ENCODE measurements at regions of chr14 and their contacts with region 1.

Region 1: DNA sequence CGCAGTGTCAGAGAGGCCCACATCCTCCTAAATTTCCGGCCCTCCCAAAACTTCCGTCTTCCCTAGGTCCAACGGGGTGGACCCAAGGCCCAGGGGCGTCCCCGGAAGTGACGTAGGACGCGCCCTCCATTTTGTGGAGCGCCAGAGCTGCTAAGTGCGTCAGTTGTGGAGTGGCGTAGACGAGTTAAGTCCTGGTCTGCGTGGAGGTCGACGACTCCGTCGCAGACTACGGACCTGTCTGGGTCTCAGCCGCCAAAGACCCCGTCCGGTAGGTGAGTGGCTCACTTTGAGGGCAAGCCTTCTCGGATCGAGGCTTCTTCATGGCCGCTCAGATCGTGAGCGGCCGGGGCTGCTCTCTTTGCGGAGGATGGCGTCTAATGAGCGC is at the start of gene SRSF5:
- DNase-seq: peak; percentile 93
- ATAC-seq: peak; percentile 81
- H3K4me3 Mint-ChIP-seq: peak within 1 kb of the TSS; percentile 96
- H3K27ac Mint-ChIP-seq: peak within 1 kb of the TSS; percentile 99
- H3K4me1 Mint-ChIP-seq: peaks cover 56% of the 10 kb centered on the region
- H3K27me3 Mint-ChIP-seq: no peaks in the 10 kb centered on the region
- total RNA-seq, gene SRSF5: 565 to 587 TPM

Region 2: DNA sequence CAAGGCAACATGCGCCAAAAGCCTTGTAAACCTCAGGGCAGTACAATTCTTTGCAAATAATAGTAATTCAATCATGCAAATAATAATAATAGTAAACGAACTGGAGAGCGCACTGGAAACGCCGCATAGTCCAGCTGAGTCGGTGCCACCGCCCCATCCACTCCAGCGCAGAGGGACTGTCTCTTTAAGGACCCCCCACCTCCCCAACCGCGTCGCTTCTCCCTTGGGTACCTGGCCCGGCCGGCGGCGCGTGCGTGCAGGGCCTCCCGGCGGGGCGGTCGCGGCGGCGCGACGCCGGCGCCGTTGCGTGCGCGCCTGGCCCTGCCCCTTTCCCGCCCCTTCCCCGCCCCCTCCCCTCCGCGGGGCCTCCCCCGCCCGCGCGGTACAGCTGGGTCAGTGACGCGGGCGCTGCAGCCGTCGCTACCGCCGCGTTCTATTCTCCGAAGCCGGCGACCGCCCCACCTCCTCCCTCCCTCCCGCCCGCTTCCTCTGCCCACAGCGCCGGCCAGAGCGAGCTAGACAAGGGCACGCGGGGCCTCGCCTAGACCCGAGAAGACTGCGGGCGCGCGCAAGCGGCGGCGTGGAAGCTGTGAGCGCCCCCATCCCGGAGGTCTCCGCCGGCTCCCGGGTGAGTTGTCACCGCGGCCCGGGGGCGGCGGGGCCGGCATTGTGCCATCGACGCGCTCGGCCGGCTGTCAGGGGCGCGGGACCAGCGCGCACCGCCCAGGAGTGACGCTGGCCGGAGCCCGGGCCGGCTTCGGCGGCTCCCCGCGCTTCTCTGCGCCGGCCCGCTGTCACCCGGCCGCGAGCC is 155.6 kb before region 1 on chr14 and contains the start of gene SUSD6:
- POLR2A ChIA-PET with region 1: interaction called, 12 read pairs
- DNase-seq: peak; percentile 88
- ATAC-seq: peak; percentile 73
- H3K4me3 Mint-ChIP-seq: peak within 1 kb of the TSS; percentile 100
- H3K27ac Mint-ChIP-seq: peak within 1 kb of the TSS; percentile 98
- H3K4me1 Mint-ChIP-seq: peaks cover 54% of the 10 kb centered on the region
- H3K27me3 Mint-ChIP-seq: no peaks in the 10 kb centered on the region
- total RNA-seq, gene SUSD6: 42.9 to 44.5 TPM

Region 3: GRCh38 chr14:69755784-69756183 is 11.2 kb before region 1 on chr14:
- POLR2A ChIA-PET with region 1: interaction called, 21 read pairs
- DNase-seq: no peak
- ATAC-seq: no peak
- H3K4me3 Mint-ChIP-seq: no peak overlapping the region
- H3K27ac Mint-ChIP-seq: peak overlapping the region; percentile 85
- H3K4me1 Mint-ChIP-seq: peaks cover 7% of the 10 kb centered on the region
- H3K27me3 Mint-ChIP-seq: no peaks in the 10 kb centered on the region

Region 4: DNA sequence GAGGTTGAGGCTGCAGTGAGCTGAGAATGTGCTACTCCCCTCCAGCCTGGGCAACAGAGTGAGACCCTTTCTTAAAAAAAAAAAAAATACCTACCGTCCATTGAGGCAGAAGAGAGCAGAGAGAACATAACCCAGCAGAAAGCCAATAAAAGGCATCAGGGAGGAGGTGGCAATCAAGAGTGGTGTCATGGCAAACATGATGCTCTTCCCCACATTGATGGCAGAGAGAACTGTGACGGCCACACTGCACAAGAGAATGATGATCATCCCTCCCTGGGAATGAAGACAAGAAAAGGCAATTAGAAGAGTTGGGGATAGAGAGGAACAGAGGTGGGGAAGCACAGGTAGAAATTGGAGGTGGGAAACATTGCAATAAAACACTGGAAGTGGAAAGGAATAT is 12.1 kb after region 1 on chr14:
- POLR2A ChIA-PET with region 1: interaction called, 19 read pairs
- DNase-seq: no peak
- ATAC-seq: no peak
- H3K4me3 Mint-ChIP-seq: no peak overlapping the region
- H3K27ac Mint-ChIP-seq: no peak overlapping the region
- H3K4me1 Mint-ChIP-seq: peaks cover 31% of the 10 kb centered on the region
- H3K27me3 Mint-ChIP-seq: no peaks in the 10 kb centered on the region